ENCODE measurements at regions of chr13 and their contacts with region 1.

Region 1: DNA sequence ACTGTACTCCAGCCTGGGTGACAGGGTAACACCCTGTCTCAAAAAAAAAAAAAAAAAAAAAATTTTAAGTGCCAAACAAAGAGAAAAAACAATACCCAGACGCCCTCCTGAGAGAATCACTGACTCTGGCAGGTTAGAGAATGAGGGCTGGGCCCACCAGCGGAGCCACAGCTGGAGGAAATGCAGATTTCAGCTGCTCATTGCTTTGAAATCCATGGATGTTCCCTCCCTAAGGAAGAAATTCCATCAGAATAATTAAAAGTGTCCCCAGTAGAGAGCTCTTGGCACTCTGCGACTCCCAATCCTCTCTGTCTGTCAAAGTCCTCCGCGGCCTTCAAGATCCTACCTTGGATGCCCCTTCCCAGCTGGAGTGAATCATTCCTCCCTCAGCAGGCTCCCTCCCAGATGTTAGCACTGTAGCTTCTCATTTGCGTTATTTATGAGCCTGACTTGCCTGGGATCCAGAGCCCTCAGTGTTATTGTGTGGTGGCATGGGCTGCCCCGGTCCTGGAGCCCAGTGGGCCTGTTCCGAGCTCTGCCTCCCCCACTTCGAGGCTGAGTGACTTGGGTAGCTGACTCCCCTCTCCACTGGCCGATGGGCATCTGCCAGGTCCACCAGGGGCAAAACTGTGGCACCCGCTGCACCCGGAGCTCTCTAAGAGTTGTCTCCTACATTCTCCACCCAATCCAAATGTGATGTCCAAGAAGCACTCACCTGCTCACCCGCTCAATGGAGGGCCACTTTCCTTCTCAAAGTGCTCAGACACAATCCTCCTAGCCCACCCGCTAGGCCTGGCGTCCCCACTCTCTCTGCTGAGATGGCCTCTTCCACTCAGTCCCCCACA is 47.0 kb downstream of the SERP2 start:
- DNase-seq: no peak
- H3K4me3 ChIP-seq: no peak overlapping the region
- H3K27ac ChIP-seq: no peak overlapping the region
- H3K4me1 ChIP-seq: no peaks in the 10 kb centered on the region
- H3K27me3 ChIP-seq: no peaks in the 10 kb centered on the region
- CTCF ChIP-seq: no peak
- EP300 ChIP-seq: no peak
- POLR2A ChIP-seq: no peak

Region 2: DNA sequence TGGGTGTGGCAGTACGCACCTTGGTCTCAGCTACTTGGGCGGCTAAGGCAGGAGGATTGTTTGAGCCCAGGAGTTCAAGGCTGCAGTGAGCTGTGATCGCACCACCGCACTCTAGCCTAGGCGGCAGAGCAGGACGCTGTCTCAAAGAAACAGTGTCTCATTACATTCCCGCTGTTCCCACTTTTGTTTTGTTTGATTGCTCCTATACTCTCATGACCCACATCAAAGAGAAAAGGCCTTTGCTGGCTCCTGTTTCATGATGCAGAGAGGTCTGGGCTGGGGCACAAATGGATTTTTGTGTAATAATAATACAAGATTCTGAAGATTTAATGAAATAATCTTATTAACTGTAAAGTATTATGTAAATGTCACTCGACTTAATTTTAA is 455.1 kb before region 1 on chr13:
- in situ Hi-C with region 1: no loop called
- intact Hi-C with region 1: loop called (anchors 2 kb)
- DNase-seq: no peak
- H3K4me3 ChIP-seq: no peak overlapping the region
- H3K27ac ChIP-seq: no peak overlapping the region
- H3K4me1 ChIP-seq: no peaks in the 10 kb centered on the region
- H3K27me3 ChIP-seq: no peaks in the 10 kb centered on the region
- CTCF ChIP-seq: no peak
- EP300 ChIP-seq: no peak
- POLR2A ChIP-seq: no peak